ENCODE measurements at regions of chr15 and their contacts with region 1.

Region 1: DNA sequence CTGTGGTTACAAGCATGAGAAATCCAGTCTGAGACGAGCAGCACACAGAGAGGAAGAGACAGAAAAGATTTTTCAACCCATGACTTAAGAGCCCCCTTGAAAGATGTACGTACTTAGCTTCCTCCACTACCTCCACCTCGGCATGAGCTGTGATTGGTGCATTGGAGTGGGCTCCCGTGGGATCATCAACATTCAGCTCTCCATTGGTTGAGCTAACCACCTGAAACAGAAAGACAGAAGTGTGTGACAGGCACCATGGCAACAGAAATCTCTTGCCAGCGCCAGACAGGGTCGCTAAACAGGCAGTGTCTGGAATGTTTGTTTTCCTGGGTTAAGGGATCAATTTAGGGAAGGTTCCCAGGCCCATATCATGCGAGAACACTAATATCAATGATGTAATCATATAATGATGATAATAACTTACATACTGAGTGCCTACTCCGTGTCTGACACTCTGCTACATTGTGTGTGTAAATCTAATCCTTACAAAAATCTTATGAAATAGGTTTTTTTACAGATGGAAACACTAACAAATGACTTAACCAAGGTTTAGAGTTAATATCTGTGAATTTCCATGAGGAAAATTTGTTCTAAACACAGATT is 17.5 kb upstream of the PPIB start:
- DNase-seq: no peak
- ATAC-seq: no peak
- H3K4me3 ChIP-seq: no peak overlapping the region
- H3K27ac ChIP-seq: no peak overlapping the region
- H3K4me1 ChIP-seq: no peaks in the 10 kb centered on the region
- CTCF ChIP-seq: no peak
- EP300 ChIP-seq: no peak
- POLR2A ChIP-seq: no peak
- RAD21 ChIP-seq: no peak

Region 2: GRCh38 chr15:64162870-64163658 is 17.3 kb before region 1 on chr15 and contains the start of gene PPIB:
- CTCF ChIA-PET with region 1: interaction called, 11 read pairs
- POLR2A ChIA-PET with region 1: no interaction called
- DNase-seq: peak; percentile 98
- ATAC-seq: peak; percentile 96 to 97
- H3K4me3 ChIP-seq: peak within 1 kb of the TSS; percentile 80
- H3K27ac ChIP-seq: peak within 1 kb of the TSS; percentile 85 to 92
- H3K4me1 ChIP-seq: peaks cover 32% of the 10 kb centered on the region
- CTCF ChIP-seq: peak; percentile 51
- EP300 ChIP-seq: no peak; a peak in 1 of 5 replicates
- POLR2A ChIP-seq: peak; percentile 94
- RAD21 ChIP-seq: peak; percentile 78 to 83
- polyA plus RNA-seq, gene PPIB: 594 and 676 TPM in 2 replicates